ENCODE measurements at regions of chr11 and their contacts with region 1.

Region 1: DNA sequence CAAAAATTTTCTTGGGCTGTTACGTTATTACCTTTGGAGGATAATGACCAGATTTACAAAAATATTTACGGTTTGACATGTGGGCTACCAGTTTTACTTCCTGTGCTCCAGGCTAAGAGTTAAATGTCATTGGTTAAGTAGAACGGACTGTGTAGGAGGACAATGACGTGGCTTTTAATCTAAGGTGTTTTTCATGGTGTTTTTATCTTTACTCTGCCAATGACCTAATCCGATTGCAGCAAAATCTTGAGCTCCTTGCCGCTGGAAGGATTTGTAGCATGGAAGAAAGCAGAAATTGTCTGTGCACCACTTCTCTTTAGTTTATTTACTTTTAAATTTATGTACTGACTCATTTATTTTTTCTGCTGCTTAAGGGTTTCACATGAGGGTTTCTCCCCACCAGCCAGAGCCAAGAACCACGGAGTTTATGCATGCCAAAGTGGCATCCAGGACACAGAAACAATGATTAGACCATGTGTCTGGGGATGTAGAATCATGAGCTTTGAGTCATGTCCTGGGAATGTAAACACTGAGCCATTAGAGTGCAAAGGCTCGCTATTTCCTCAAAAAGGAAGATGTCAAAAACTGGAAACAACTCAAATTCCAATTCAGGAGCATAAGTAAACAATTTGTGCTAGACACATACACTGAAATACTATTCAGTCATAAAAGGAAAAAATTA is 1.9 kb upstream of the CARD16 start:
- DNase-seq: peak; percentile 99
- H3K4me3 ChIP-seq: no peak overlapping the region
- H3K27ac ChIP-seq: peak overlapping the region; percentile 49
- H3K27me3 ChIP-seq: no peaks in the 10 kb centered on the region
- CTCF ChIP-seq: no peak

Region 2: GRCh38 chr11:105168457-105168856 is 121.4 kb after region 1 on chr11:
- CTCF ChIA-PET with region 1: no interaction called
- POLR2A ChIA-PET with region 1: interaction called, 12 read pairs
- DNase-seq: no peak
- H3K4me3 ChIP-seq: no peak overlapping the region
- H3K27ac ChIP-seq: no peak overlapping the region
- H3K27me3 ChIP-seq: no peaks in the 10 kb centered on the region
- CTCF ChIP-seq: no peak